Right ventricle myocardium superior (tissue), 1 donor: ENCODE measurements at regions of chr21 and their contacts with region 1.

Region 1: DNA sequence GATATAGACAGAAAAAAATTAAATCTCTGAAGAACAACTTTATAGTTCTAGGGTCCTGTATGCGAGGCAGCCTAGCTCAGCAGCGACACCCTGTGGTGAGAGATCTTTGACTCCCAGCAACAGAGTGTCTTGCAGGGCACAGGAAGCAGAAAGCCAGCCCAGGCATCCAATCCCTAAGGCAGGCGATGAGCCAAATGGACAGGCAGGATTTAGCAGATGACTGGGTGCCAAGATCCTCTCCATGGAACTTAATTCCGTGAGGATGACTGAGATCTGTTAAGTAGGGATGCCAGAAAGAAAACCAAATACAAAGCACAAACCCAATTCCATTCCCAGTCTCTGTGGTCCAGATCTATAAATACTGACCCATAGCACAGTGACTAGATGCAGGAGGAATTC is 38.8 kb downstream of the HLCS start:
- DNase-seq: peak; percentile 82
- ATAC-seq: peak; percentile 90

Region 2: GRCh38 chr21:36504067-36505058 is 423.4 kb before region 1 on chr21:
- intact Hi-C with region 1: loop called (anchors 5 kb)
- DNase-seq: no peak
- ATAC-seq: peak; percentile 36

Region 3: DNA sequence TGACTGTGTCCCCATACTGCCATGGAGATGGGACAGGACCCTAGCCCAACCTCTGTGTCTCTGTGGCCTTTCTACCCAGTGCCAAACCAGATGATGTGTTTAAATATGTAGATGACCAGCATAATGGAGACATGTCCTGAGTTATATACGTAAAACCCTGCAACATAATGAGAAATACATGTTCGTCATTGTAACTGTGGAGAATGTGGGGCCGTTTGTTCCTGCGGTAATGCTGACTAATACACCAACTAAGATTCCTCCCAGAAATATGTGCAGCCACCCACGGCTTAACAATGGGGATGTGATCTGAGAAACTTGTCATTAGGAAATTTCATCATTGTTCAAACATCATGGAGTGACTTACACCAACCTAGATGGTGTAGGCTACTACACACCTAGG is 300.5 kb before region 1 on chr21:
- intact Hi-C with region 1: loop called (anchors 10 kb)
- DNase-seq: no peak
- ATAC-seq: no peak